Mammary epithelial cell (primary cell): ENCODE measurements at regions of chr1 and their contacts with region 1.

Region 1: GRCh38 chr1:117231748-117232373 is 21.1 kb upstream of the VTCN1 start:
- DNase-seq: no peak
- H3K4me3 ChIP-seq: no peak overlapping the region
- H3K27ac ChIP-seq: no peak overlapping the region
- H3K4me1 ChIP-seq: no peaks in the 10 kb centered on the region
- H3K27me3 ChIP-seq: no peaks in the 10 kb centered on the region
- CTCF ChIP-seq: no peak

Region 2: DNA sequence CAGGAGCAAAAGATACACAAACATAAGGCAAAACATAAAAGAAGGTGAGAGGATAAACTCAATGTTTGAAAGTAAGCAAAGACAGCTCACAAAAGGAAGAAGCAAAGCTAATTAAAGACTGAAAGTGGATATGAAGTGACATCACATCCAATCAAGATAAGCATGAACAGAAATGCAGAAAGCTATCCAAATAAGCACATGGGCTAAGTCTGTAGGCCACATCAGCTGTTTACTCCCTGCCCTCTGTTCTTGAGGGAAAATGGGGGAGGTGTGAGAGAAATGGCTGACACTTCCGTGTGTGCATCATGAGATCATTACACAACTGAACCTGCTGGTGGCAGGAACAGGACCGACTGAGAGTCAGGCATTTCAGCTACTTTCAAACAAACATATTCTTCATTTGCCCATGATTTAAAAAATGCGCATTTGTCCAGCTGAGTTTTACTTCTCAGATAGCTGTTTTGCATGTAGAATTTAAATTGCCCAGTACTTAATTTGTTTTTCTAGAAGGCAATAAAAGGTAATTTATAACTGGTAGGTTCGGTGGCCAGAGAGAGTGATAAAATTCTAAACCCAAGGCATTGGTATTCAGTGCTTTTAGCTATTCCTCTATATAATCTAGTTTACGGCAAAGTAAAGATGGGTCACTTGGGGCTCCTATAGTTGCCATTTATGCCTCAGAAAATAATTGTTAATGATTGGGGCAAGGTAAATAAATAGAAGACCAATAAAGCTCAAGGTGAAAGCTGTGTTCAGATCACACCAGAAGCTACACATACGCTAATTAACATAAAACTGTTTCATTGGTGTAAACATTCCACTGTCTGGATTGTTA is 108.2 kb after region 1 on chr1:
- CTCF ChIA-PET with region 1: no interaction called
- dilution Hi-C with region 1: loop called (anchors 5 kb)
- in situ Hi-C with region 1: no loop called
- intact Hi-C with region 1: no loop called
- DNase-seq: peak; percentile 18
- H3K4me3 ChIP-seq: no peak overlapping the region
- H3K27ac ChIP-seq: no peak overlapping the region
- H3K4me1 ChIP-seq: no peaks in the 10 kb centered on the region
- H3K27me3 ChIP-seq: peaks cover 3% of the 10 kb centered on the region
- CTCF ChIP-seq: peak in 1 of 2 donors; percentile 13

Region 3: GRCh38 chr1:117499071-117499470 is 267.2 kb after region 1 on chr1:
- CTCF ChIA-PET with region 1: no interaction called
- dilution Hi-C with region 1: no loop called
- in situ Hi-C with region 1: no loop called
- intact Hi-C with region 1: no loop called
- DNase-seq: no peak
- H3K4me3 ChIP-seq: no peak overlapping the region
- H3K27ac ChIP-seq: no peak overlapping the region
- H3K4me1 ChIP-seq: no peaks in the 10 kb centered on the region
- H3K27me3 ChIP-seq: no peaks in the 10 kb centered on the region
- CTCF ChIP-seq: no peak